ENCODE measurements at regions of chr20 and their contacts with region 1.

Region 1: GRCh38 chr20:41339507-41340326 is 904 bp upstream of the LPIN3 start:
- DNase-seq: peak; percentile 91
- H3K4me3 ChIP-seq: peak overlapping the region; percentile 26 to 28
- H3K27ac ChIP-seq: peak overlapping the region; percentile 71 to 72
- H3K4me1 ChIP-seq: peaks cover 4% of the 10 kb centered on the region
- H3K27me3 ChIP-seq: no peaks in the 10 kb centered on the region
- CTCF ChIP-seq: peak; percentile 99 to 100 (median 100)
- POLR2A ChIP-seq: no peak

Region 2: GRCh38 chr20:40970201-40970600 is 369.5 kb before region 1 on chr20:
- intact Hi-C with region 1: loop called (anchors 10 kb)
- DNase-seq: no peak
- H3K4me3 ChIP-seq: no peak overlapping the region
- H3K27ac ChIP-seq: no peak overlapping the region
- H3K4me1 ChIP-seq: no peaks in the 10 kb centered on the region
- H3K27me3 ChIP-seq: no peaks in the 10 kb centered on the region
- CTCF ChIP-seq: no peak
- POLR2A ChIP-seq: no peak

Region 3: DNA sequence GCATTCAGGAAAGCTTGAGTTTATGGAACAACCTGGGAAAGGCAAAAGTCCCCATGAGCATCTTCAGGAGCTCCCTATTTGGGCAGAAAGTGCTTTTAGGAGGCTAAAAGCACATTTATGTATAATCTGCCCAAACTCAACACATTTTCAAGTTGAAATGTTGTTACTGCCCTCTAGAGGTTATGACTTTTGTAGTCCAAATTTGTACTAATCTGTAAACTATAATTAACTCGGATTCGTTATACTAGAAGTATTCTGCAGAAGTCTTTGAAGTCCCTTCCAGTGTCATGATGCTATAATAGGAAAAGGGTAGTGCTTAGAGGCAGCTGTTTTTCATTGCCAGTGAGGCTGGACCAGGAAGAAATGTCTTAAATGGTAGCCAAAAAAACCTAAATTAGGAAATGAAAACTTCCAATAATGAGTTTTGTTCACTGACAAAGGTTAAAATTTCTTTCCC is 71.7 kb after region 1 on chr20:
- intact Hi-C with region 1: loop called (anchors 5 kb)
- DNase-seq: no peak
- H3K4me3 ChIP-seq: no peak overlapping the region
- H3K27ac ChIP-seq: peak overlapping the region; percentile 46 to 58
- H3K4me1 ChIP-seq: peaks cover 9% of the 10 kb centered on the region
- H3K27me3 ChIP-seq: no peaks in the 10 kb centered on the region
- CTCF ChIP-seq: peak in 3 of 4 experiments; percentile 31 to 42 (median 31)
- POLR2A ChIP-seq: no peak